ENCODE measurements at regions of chr3 and their contacts with region 1.

Region 1: DNA sequence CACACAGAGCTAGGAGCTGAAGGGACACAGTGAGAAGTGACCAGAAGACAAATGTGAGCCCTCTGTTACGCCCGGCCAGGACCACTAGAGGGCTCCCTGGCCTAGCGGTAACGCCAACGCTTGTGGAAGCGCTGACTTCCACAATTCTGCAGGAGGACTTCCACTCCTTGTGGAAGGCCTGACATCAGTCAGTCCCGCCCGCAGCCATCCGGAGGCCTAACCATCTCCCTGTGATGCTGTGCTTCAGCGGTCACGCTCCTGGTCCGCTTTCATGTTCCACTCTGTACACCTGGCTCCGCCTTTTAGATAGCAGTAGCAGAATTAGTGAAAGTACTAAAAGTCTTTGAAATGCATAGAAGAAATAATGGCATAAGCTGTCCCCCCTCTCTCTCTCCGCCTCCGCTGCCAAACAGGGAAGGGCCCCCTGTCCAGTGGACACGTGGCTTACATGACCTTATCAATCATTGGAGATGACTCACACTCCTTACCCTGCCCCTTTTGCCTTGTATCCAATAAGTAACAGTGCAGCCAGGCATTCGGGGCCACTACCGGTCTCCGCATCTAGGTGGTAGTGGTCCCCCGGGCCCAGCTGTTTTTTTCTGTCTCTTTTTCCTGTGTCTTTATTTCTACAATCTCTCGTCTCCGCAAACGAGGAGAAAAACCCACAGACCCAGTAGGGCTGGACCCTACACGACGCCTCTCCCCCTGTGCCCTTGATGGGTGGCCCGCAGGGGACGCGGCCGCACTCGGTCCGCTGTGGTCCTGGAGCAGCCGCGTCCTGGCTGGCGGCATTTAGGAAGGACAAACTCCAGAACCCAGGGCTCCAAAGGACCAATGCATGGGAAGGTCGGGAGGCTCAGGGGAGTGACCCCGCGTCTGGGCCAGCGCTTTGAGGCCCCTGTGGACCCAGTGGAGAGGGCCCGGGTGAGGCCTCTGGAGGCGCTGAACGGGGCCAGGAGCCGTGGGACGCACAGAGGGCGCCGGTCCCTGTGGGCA is 27.0 kb upstream of the RPL32 start:
- DNase-seq: peak; percentile 89
- H3K4me3 ChIP-seq: peak overlapping the region in 1 of 2 experiments; percentile 10; a peak in 1 of 4 replicates
- H3K27ac ChIP-seq: no peak overlapping the region
- H3K4me1 ChIP-seq: peaks cover 0 to 12% of the 10 kb centered on the region in 2 experiments; a peak in 1 of 4 replicates
- H3K27me3 ChIP-seq: no peaks in the 10 kb centered on the region
- CTCF ChIP-seq: peak; percentile 84
- EP300 ChIP-seq: no peak
- RAD21 ChIP-seq: peak; percentile 94

Region 2: DNA sequence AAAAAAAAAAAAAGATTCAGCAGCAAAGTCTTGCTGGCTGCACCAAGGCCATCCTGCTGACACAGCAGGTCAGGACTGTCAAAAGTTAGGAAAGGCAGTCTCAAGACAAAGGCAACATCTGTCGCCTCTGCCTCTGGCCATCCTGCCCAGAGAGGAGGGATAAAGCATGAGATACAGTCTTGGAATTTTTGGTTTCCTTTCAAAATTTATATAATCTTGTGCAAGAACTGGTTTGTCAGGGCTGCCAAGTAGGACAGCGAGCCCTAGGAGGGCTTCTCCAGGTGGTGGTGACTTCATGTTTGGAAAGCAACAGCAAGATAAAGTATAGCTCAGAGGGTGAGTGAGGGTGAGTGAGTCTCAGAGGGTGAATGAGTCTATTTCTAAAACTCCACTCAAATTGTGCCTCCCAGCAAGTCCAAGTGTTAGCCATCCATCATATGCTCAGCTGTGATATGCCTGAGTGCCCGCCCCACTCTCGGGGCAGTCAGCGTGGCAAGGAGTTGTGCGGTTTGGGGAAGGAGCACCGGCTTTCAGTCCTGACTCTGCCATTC is 15.1 kb before region 1 on chr3:
- CTCF ChIA-PET with region 1: interaction called, 15 read pairs
- POLR2A ChIA-PET with region 1: no interaction called
- DNase-seq: no peak
- H3K4me3 ChIP-seq: no peak overlapping the region
- H3K27ac ChIP-seq: no peak overlapping the region
- H3K4me1 ChIP-seq: no peaks in the 10 kb centered on the region; a peak in 1 of 4 replicates
- H3K27me3 ChIP-seq: no peaks in the 10 kb centered on the region; the same call in 1 of the 2 replicates
- CTCF ChIP-seq: no peak
- EP300 ChIP-seq: no peak
- RAD21 ChIP-seq: no peak

Region 3: GRCh38 chr3:12884186-12884680 is 15.9 kb after region 1 on chr3:
- CTCF ChIA-PET with region 1: interaction called, 150 read pairs
- POLR2A ChIA-PET with region 1: no interaction called
- DNase-seq: no peak
- H3K4me3 ChIP-seq: no peak overlapping the region
- H3K27ac ChIP-seq: no peak overlapping the region
- H3K4me1 ChIP-seq: no peaks in the 10 kb centered on the region; a peak in 1 of 4 replicates
- H3K27me3 ChIP-seq: peaks cover 5% of the 10 kb centered on the region; the same call in 1 of the 2 replicates
- CTCF ChIP-seq: no peak
- EP300 ChIP-seq: no peak
- RAD21 ChIP-seq: no peak

Region 4: GRCh38 chr3:13419505-13420044 is 551.2 kb after region 1 on chr3:
- CTCF ChIA-PET with region 1: no interaction called
- POLR2A ChIA-PET with region 1: no interaction called
- DNase-seq: peak; percentile 86
- H3K4me3 ChIP-seq: peak overlapping the region in 1 of 2 experiments; percentile 58; a peak in 2 of 4 replicates
- H3K27ac ChIP-seq: peak overlapping the region in 1 of 2 experiments; percentile 63; a peak in 2 of 4 replicates
- H3K4me1 ChIP-seq: peaks cover 3 to 26% of the 10 kb centered on the region in 2 experiments; a peak in 2 of 4 replicates
- H3K27me3 ChIP-seq: 0 out of 2 replicates have a peak, but pooled peaks cover 8% of the 10 kb centered on the region
- CTCF ChIP-seq: no peak
- EP300 ChIP-seq: no peak
- RAD21 ChIP-seq: no peak